Common myeloid progenitor, CD34-positive (primary cell): ENCODE measurements at regions of chr5 and their contacts with region 1.

Region 1: DNA sequence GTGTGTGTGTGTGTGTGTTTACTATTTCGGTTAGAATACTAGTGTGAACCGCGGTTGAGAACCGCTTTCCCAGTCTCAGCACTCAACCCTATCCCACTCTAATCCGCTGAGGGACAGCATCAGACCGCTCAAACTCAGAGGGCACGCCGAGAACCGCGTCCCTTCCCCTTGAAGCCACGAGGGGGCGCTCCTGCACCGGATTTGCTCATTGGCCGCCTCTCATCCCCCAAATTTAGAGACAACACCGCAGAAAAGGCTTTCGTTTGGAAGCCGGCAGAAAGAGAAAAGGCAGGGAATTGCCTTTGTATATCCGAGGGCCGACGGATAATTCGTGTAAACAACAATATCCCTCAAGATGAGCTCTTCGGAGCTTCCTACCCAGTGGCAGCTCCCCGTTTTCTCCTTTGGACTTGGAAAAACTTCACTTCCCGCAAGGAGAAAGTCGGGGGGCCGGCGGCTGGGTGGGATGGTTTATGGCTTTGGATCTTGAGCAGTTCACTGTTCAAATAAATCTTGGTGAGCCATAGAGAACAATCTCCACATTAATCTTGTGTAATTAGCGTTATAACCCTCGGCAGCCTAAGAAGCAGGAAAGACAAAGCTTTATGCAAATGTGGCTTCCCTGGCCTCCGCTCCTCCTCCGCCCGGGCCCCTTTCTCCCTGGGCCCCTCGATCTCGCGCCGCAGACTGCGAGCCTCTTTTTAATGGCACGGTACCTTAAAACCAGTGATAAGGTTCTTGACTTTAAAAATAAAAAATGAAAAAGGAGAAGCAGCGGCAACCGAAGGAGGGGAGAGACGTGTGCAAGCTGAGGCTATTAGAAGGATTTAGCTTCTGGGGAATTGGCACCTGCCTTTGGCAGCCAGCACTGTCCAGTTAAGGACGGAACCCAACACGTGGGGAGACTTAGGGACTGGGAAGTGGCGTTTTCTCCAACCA is 296.8 kb downstream of the PARP8 start:
- DNase-seq: peak; percentile 53 to 66 (median 65)
- H3K4me3 ChIP-seq: peak overlapping the region; percentile 8 to 70 (median 51)
- H3K27ac ChIP-seq: no peak overlapping the region
- H3K4me1 ChIP-seq: peaks cover 4 to 25% (median 16%) of the 10 kb centered on the region in 4 experiments
- H3K27me3 ChIP-seq: peaks cover 38 to 70% (median 50%) of the 10 kb centered on the region in 5 experiments

Region 2: GRCh38 chr5:52657247-52657645 is 1694.0 kb after region 1 on chr5:
- CTCF ChIA-PET with region 1: interaction called, 14 read pairs
- POLR2A ChIA-PET with region 1: no interaction called
- DNase-seq: peak; percentile 48 to 73 (median 72)
- H3K4me3 ChIP-seq: no peak overlapping the region
- H3K27ac ChIP-seq: no peak overlapping the region
- H3K4me1 ChIP-seq: no peaks in the 10 kb centered on the region
- H3K27me3 ChIP-seq: peaks cover 0 to 9% (median 2%) of the 10 kb centered on the region in 5 experiments